ENCODE measurements at regions of chr20 and their contacts with region 1.

Region 1: DNA sequence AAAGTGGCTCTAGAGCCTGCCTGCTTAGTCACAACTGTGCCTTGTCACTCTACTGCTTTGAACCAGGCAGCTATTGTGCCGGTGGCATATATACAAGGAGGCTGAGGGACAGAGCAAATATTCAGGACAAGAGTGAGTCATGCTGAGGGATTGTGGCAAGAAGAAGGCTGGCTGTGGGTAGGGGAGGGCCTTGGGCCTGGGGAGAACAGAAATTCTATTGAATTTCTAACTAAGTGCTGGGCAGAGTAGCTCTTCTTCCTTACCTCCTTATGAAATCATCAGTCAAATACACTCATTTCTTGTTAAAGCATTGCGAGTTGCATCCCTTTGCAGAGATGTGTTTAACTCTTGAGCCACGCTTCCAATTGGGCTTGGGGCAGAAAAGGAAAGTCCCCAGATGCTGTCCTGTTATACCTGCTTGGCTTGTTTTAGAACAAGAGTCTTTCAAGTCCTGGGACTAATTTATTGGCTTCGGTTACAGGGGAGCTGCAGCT is 59.7 kb downstream of the PFDN4 start:
- DNase-seq: peak; percentile 88
- H3K4me3 Mint-ChIP-seq: peak overlapping the region; percentile 58
- H3K27ac Mint-ChIP-seq: peak overlapping the region; percentile 99
- H3K4me1 Mint-ChIP-seq: peaks cover 47% of the 10 kb centered on the region
- H3K27me3 Mint-ChIP-seq: no peaks in the 10 kb centered on the region
- CTCF ChIP-seq: no peak

Region 2: DNA sequence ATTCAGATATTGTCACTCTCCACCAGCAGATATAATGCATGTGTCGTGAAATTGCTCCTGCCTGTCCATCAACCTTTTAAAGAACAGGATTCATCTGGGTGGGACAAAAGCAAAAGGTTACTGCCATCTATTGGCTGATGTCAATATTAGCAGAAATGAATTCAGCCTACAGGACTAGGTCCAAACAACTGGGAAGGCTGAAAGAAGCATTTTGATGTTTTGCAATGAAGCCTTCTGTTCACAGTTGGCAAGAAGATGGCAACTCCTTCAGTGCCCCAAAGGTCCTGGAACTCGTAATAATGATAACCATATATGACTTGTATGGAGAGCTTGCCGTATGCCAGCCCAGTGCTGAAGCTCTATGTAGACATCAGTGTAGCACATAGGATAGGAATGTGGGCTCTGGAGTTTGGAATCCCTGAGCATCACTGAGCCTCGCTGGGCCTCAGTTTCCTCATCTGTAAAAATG is 204.7 kb before region 1 on chr20:
- CTCF ChIA-PET with region 1: no interaction called
- intact Hi-C with region 1: loop called (anchors 5 kb)
- DNase-seq: peak; percentile 33
- H3K4me3 Mint-ChIP-seq: no peak overlapping the region
- H3K27ac Mint-ChIP-seq: no peak overlapping the region
- H3K4me1 Mint-ChIP-seq: peaks cover 22% of the 10 kb centered on the region
- H3K27me3 Mint-ChIP-seq: no peaks in the 10 kb centered on the region
- CTCF ChIP-seq: peak; percentile 69

Region 3: GRCh38 chr20:54194724-54195438 is 72.7 kb before region 1 on chr20:
- CTCF ChIA-PET with region 1: no interaction called
- intact Hi-C with region 1: no loop called
- DNase-seq: peak; percentile 51
- H3K4me3 Mint-ChIP-seq: no peak overlapping the region
- H3K27ac Mint-ChIP-seq: no peak overlapping the region
- H3K4me1 Mint-ChIP-seq: peaks cover 59% of the 10 kb centered on the region
- H3K27me3 Mint-ChIP-seq: no peaks in the 10 kb centered on the region
- CTCF ChIP-seq: peak; percentile 62

Region 4: GRCh38 chr20:54257071-54257840 is 10.3 kb before region 1 on chr20:
- CTCF ChIA-PET with region 1: interaction called, 25 read pairs
- intact Hi-C with region 1: no loop called
- DNase-seq: peak; percentile 81
- H3K4me3 Mint-ChIP-seq: peak overlapping the region; percentile 48
- H3K27ac Mint-ChIP-seq: peak overlapping the region; percentile 90
- H3K4me1 Mint-ChIP-seq: peaks cover 44% of the 10 kb centered on the region
- H3K27me3 Mint-ChIP-seq: no peaks in the 10 kb centered on the region
- CTCF ChIP-seq: no peak

Region 5: DNA sequence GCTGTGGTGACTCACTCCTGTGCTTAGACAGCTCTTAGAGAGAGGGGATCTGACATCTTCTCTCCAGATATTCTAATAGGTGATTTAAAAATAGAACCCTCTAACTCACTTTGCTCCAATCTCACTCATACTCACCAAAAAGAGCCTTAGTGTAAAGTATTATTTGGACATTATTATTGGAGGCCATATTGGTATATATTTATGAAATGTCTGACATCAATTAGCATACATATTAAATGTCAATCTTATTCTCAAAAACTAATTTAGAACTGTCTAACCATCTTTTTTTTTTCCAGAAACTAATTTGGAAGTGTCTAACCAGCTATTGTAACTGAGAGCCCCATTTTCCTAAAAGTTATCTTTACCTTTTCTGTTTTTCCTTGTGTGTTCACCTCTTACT is 36.0 kb after region 1 on chr20:
- CTCF ChIA-PET with region 1: no interaction called
- intact Hi-C with region 1: no loop called
- DNase-seq: no peak
- H3K4me3 Mint-ChIP-seq: no peak overlapping the region
- H3K27ac Mint-ChIP-seq: no peak overlapping the region
- H3K4me1 Mint-ChIP-seq: peaks cover 8% of the 10 kb centered on the region
- H3K27me3 Mint-ChIP-seq: no peaks in the 10 kb centered on the region
- CTCF ChIP-seq: no peak

Region 6: DNA sequence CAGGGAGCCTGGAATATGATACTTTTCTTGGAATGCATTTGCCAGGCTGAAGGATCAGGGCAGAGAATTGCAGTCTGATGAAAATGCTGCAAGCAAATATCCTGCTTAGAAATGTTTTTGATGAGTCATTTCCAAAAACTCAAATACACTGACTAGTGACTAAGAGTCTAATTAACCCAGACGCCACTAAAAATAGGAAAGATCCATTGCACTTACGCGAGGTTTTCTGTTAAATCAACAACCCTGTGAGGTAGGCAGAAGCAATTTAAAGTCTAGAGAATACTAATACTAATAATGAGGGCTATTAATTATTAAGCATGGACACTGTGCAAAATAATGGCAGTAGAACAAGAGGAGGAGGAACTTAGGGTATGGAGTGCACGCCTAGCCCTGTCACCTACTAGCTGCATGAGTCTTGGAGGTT is 77.8 kb after region 1 on chr20:
- CTCF ChIA-PET with region 1: interaction called, 4 read pairs
- intact Hi-C with region 1: loop called (anchors 5 kb)
- DNase-seq: peak; percentile 16
- H3K4me3 Mint-ChIP-seq: peak overlapping the region; percentile 9
- H3K27ac Mint-ChIP-seq: peak overlapping the region; percentile 55
- H3K4me1 Mint-ChIP-seq: peaks cover 65% of the 10 kb centered on the region
- H3K27me3 Mint-ChIP-seq: no peaks in the 10 kb centered on the region
- CTCF ChIP-seq: no peak

Region 7: DNA sequence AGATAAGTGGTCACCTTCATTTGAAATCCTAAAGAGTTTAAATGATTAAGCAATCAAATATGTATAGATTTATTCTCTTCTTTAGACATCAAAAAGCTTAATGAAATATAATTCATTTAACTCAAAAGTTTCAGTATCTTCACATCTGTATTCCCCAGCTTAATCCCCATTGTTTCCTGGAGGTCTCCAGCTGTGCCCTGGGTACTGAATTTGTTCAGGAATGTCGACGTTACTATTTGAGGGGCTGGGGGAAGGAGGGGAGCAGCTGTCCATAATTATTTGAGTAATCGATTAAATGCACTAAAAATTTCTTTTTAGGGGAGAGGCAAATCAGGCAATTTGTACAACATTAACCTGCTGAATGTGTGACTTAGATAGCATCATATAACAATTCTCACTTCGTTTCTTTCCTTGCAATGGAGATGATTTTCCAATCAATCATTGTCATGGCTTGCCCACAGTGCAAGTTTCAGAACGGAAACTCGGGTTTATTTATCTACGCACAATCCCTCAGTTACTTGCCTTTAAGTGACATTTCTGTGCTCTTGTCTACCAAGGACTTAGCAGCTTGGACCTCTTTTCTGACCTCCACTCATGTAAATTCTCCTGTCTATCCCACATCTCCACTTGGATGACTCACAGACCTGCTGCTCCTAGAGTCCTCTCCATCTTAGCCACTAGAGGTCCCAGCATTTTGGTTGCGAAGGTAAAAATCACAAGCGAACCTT is 211.7 kb after region 1 on chr20:
- CTCF ChIA-PET with region 1: no interaction called
- intact Hi-C with region 1: no loop called
- DNase-seq: peak; percentile 20
- H3K4me3 Mint-ChIP-seq: no peak overlapping the region
- H3K27ac Mint-ChIP-seq: no peak overlapping the region
- H3K4me1 Mint-ChIP-seq: no peaks in the 10 kb centered on the region
- H3K27me3 Mint-ChIP-seq: peaks cover 68% of the 10 kb centered on the region
- CTCF ChIP-seq: no peak